HEK293 (cell line): ENCODE measurements at regions of chr19 and their contacts with region 1.

Region 1: DNA sequence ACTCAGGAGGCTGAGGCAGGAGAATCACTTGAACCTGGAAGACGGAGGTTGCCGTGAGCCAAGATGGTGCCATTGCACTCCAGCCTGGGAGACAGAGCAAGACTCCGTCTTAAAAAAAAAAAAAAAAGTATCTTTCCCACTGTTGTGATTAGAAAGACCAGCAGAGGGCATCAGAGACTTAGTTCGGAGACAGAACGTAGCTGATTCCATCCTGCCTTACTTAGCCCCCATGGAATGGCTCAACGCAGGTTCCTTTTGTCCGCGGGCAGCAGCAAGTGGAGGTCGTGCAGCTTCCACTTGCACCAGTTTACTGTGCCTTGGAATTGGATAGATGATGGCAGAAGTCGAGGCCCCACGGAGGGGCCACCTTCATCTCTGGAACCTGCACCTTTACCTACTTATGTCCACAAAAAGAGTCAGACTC is 8.1 kb downstream of the TIMM29 start:
- H3K4me3 ChIP-seq: no peak overlapping the region
- H3K27ac ChIP-seq: no peak overlapping the region
- H3K4me1 ChIP-seq: no peaks in the 10 kb centered on the region; the same call in 1 of the 2 replicates
- CTCF ChIP-seq: peak; percentile 94

Region 2: DNA sequence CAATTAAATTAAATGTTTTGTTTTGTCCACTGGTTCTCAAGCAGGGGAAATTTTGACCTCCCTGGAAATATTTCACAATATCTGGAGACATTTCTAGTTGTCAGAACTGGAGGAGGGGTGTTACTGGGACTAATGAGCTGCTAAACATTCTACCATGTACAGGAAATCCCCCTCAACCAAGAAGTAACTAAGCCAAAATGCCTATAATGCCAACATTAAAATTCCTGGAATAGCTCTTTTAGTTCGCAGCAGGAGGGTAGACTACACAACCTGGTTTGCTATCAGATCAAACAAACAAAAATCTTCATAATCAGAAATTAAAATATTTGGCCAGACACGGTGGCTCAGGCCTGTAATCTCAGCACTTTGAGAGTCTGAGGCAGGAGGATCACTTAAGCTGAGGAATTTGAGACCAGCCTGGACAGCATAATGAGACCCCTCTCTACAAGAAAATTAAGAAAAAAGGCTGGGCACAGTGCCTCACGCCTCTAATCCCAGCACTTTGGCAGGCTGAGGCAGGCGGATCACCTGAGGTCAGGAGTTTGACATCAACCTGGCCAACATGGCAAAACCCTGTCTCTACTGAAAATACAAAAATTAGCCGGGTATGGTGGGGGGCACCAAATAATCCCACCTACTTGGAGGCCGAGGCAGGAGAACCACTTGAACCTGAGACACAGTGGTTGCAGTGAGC is 10.4 kb after region 1 on chr19:
- CTCF ChIA-PET with region 1: interaction called, 16 read pairs
- POLR2A ChIA-PET with region 1: interaction called, 3 read pairs
- H3K4me3 ChIP-seq: no peak overlapping the region
- H3K27ac ChIP-seq: no peak overlapping the region
- H3K4me1 ChIP-seq: no peaks in the 10 kb centered on the region
- CTCF ChIP-seq: no peak

Region 3: DNA sequence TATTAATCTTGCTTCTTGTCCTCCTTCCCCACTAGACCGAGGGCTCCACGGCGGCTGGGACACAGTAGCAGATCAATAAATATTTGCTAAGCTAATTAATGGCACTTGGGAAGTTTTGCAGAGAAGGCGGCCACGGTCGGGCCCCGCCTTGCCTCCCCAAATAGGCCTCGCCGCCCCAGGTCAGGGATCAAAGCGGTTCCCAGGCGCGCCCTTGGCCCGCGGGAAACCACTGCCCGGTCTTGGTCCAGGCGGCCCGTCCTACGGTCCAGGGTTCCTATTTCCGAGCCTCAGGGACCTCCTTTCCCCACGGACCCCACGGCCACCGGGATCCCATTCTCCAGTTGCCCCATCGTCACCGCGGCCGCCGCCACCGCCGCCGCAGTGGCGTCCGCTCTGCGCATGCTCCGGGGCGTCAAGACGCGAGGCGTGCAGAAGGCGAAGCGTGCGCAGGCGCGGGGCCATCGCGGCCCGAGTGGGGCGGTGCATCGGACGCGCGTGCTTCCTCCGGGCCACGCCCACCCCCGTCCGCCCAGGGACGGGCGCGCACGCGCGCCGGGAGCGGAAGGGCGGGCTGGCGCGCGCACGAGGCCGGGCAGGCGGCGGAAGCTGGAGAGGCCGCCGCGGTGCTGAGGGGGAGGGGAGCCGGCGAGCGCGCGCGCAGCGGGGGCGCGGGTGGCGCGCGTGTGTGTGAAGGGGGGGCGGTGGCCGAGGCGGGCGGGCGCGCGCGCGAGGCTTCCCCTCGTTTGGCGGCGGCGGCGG is 23.8 kb after region 1 on chr19 and contains the start of gene SMARCA4:
- CTCF ChIA-PET with region 1: interaction called, 14 read pairs
- POLR2A ChIA-PET with region 1: interaction called, 4 read pairs
- H3K4me3 ChIP-seq: peak within 1 kb of the TSS; percentile 67
- H3K27ac ChIP-seq: peak within 1 kb of the TSS; percentile 94
- H3K4me1 ChIP-seq: peaks cover 5% of the 10 kb centered on the region
- CTCF ChIP-seq: no peak

Region 4: GRCh38 chr19:11005521-11005920 is 68.8 kb after region 1 on chr19:
- CTCF ChIA-PET with region 1: interaction called, 21 read pairs
- POLR2A ChIA-PET with region 1: no interaction called
- H3K4me3 ChIP-seq: no peak overlapping the region
- H3K27ac ChIP-seq: no peak overlapping the region
- H3K4me1 ChIP-seq: no peaks in the 10 kb centered on the region
- CTCF ChIP-seq: no peak

Region 5: GRCh38 chr19:11035441-11036377 is 99.0 kb after region 1 on chr19:
- CTCF ChIA-PET with region 1: interaction called, 22 read pairs
- POLR2A ChIA-PET with region 1: interaction called, 4 read pairs
- H3K4me3 ChIP-seq: no peak overlapping the region
- H3K27ac ChIP-seq: no peak overlapping the region
- H3K4me1 ChIP-seq: no peaks in the 10 kb centered on the region
- CTCF ChIP-seq: peak; percentile 84

Region 6: GRCh38 chr19:11053817-11054195 is 117.1 kb after region 1 on chr19:
- CTCF ChIA-PET with region 1: no interaction called
- POLR2A ChIA-PET with region 1: no interaction called
- H3K4me3 ChIP-seq: no peak overlapping the region
- H3K27ac ChIP-seq: no peak overlapping the region
- H3K4me1 ChIP-seq: no peaks in the 10 kb centered on the region
- CTCF ChIP-seq: no peak